ENCODE measurements at regions of chr17 and their contacts with region 1.

Region 1: DNA sequence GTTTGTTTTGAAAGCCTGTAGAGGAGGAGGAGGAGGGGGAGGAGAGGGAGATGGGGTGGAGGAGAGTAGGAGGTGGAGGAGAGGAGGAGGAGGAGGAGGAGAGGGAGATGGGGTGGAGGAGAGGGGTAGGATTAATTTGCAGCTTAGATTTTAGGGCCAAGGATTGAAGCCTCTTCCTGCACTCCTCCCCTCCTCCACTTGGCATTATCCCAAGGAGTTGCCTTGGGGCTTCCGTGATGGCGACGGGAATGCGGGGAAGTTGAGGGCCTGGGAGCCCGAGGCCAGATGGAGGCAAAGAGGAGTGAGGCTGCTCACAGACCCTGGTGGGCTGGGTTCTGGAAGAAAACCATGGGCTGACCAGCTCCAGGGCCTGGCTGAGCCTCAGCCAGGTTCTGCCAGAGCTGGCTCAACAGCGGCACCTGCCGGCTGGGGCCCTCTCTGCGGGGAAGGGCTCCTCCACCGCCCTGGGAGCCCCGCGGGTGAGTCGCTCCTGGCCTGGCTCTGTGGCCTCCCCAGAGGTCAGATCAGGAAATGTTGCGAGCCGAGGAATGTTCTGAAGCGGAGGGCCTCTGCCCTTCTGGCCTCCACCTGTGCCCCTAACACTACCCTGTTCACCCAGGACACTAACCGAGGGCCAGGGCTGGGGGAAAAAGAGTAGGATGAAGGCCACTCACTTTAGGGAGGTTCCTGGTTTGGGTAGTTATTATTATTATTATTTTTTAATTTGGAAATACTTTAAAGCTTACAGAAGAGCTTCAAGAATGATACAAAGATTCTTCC is 23.9 kb upstream of the FMNL1 start:
- DNase-seq: peak; percentile 80
- H3K4me3 ChIP-seq: no peak overlapping the region
- H3K27ac ChIP-seq: peak overlapping the region; percentile 44 to 46
- H3K4me1 ChIP-seq: no peaks in the 10 kb centered on the region
- H3K27me3 ChIP-seq: no peaks in the 10 kb centered on the region
- CTCF ChIP-seq: peak; percentile 95 to 99 (median 98)
- POLR2A ChIP-seq: no peak

Region 2: DNA sequence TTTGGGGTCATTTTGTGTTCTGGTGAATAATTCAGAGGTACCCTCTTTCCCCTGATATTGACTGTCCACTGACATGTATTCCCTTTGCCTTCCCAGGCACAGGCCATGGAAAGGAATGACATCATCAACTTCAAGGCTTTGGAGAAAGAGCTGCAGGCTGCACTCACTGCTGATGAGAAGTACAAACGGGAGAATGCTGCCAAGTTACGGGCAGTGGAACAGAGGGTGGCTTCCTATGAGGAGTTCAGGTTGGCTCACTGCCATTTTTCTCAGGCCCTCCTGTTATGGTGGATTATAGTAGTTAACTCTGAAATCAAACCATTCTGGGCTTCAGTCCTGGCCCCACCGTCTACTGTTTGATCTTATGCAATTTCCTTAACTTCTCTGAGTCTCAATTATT is 296.9 kb before region 1 on chr17:
- intact Hi-C with region 1: loop called (anchors 10 kb)
- DNase-seq: no peak
- H3K4me3 ChIP-seq: no peak overlapping the region
- H3K27ac ChIP-seq: no peak overlapping the region
- H3K4me1 ChIP-seq: peaks cover 5% of the 10 kb centered on the region
- H3K27me3 ChIP-seq: no peaks in the 10 kb centered on the region
- CTCF ChIP-seq: no peak
- POLR2A ChIP-seq: no peak

Region 3: DNA sequence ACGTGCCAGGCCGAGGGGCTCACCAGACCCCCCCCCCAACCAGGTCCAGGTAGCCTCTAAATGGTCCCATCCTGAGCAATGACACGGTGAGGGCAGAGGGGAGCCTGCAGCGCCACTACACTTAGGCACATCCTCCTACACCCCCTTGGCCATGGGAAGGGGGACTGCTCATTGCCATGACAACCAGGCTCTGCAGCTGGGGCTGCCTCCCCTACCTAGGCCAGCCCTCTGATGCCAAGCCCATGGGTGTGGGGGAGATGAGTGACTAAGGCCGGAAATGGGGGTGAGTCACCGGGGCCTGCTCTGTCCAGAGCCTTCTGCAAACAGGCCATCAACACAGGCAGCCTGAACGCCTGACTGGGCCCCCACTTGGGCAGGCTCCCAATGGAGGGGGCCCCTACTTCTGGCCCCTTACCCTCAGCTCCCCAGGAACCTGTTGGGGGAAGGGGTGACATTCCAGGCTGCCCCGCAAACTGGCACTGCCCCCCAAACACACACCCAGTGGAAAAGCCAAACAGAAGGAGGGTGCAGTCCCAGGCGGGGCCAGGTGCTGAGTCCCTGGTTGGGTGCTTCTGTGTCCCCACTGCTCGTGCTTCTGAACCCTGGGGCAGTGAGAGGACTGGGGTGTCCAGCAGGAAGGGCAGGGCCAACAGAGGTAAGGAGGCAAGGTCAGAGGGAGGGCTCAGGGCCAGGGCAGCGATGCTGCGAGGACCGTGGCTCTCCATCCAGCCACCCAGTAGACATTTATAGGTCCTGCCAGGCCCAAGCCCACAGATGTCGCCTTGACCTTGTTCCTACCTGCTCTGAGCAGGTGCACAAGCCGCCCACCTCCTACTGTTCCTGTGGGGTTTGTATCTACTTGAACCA is 73.6 kb before region 1 on chr17:
- intact Hi-C with region 1: no loop called
- DNase-seq: no peak
- H3K4me3 ChIP-seq: no peak overlapping the region
- H3K27ac ChIP-seq: no peak overlapping the region
- H3K4me1 ChIP-seq: peaks cover 5% of the 10 kb centered on the region
- H3K27me3 ChIP-seq: no peaks in the 10 kb centered on the region
- CTCF ChIP-seq: no peak
- POLR2A ChIP-seq: peak; percentile 38

Region 4: GRCh38 chr17:45270828-45271418 is 73.2 kb after region 1 on chr17:
- intact Hi-C with region 1: no loop called
- DNase-seq: no peak
- H3K4me3 ChIP-seq: no peak overlapping the region
- H3K27ac ChIP-seq: no peak overlapping the region
- H3K4me1 ChIP-seq: no peaks in the 10 kb centered on the region
- H3K27me3 ChIP-seq: no peaks in the 10 kb centered on the region
- CTCF ChIP-seq: peak in 3 of 4 experiments; percentile 42 to 49 (median 46)
- POLR2A ChIP-seq: no peak

Measured in prostate gland (tissue), 2 donors.